ENCODE measurements at regions of chr1 and their contacts with region 1.

Region 1: GRCh38 chr1:36369061-36369861 is 16.5 kb downstream of the STK40 start:
- DNase-seq: peak; percentile 91
- ATAC-seq: peak; percentile 52
- H3K4me3 Mint-ChIP-seq: no peak overlapping the region
- H3K27ac Mint-ChIP-seq: peak overlapping the region; percentile 50
- H3K4me1 Mint-ChIP-seq: peaks cover 73% of the 10 kb centered on the region
- H3K27me3 Mint-ChIP-seq: no peaks in the 10 kb centered on the region

Region 2: GRCh38 chr1:36323597-36324352 is 45.5 kb before region 1 on chr1 and contains the start of gene EVA1B:
- CTCF ChIA-PET with region 1: interaction called, 13 read pairs
- POLR2A ChIA-PET with region 1: interaction called, 4 read pairs
- DNase-seq: peak; percentile 72
- ATAC-seq: peak; percentile 64
- H3K4me3 Mint-ChIP-seq: peak within 1 kb of the TSS; percentile 77
- H3K27ac Mint-ChIP-seq: peak within 1 kb of the TSS; percentile 74
- H3K4me1 Mint-ChIP-seq: peaks cover 47% of the 10 kb centered on the region
- H3K27me3 Mint-ChIP-seq: peaks cover 16% of the 10 kb centered on the region
- total RNA-seq, gene EVA1B: 12.3 to 13.3 TPM

Region 3: GRCh38 chr1:36350659-36351226 is 18.5 kb before region 1 on chr1:
- CTCF ChIA-PET with region 1: interaction called, 82 read pairs
- POLR2A ChIA-PET with region 1: interaction called, 16 read pairs
- DNase-seq: peak; percentile 37
- ATAC-seq: peak; percentile 73
- H3K4me3 Mint-ChIP-seq: peak overlapping the region; percentile 15
- H3K27ac Mint-ChIP-seq: peak overlapping the region; percentile 81
- H3K4me1 Mint-ChIP-seq: peaks cover 23% of the 10 kb centered on the region
- H3K27me3 Mint-ChIP-seq: no peaks in the 10 kb centered on the region

Region 4: DNA sequence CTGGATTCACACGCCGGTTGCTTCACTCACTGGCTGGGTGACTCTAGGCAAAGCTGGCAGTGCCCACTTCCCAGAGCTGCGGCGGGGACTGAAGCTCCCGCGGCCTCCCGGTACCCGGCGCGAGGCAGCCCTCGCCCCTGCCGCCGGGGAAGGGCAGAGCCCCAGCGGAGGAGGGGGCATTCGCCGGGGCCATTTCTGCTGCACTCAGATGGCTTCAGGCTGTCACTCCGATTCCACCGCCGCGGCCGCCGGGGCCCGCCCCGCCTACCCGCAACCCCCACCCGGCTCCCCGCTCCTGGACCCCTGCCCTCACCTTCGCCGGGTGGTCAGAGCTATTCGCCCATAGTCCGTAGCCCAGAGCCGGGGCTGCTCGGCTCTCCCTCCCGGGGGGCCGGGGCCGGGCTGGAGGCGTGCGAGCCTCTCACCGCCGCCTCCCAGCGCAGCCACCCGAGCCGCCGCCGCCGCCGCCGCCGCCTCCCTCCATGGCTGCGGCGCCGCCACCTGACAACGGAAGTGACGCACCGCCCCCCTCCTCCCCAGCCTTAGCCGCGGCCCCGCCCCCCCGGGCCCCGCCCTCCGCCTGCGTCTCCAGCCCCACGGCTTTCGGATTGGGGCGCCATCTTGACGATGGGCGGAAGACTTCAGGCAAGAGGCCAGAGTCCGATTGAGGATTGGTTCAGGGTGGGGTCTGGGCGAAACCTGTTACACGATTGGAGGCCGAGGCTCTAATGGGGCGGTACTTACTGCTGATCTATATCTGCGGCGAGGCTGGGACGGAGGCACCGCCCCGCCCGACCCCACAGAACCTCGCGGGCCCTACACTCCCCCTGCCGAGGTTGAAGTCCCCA is 16.4 kb after region 1 on chr1 and contains the start of gene STK40:
- CTCF ChIA-PET with region 1: interaction called, 24 read pairs
- POLR2A ChIA-PET with region 1: interaction called, 8 read pairs
- DNase-seq: peak; percentile 99
- ATAC-seq: peak; percentile 92
- H3K4me3 Mint-ChIP-seq: peak within 1 kb of the TSS; percentile 86
- H3K27ac Mint-ChIP-seq: peak within 1 kb of the TSS; percentile 99
- H3K4me1 Mint-ChIP-seq: peaks cover 54% of the 10 kb centered on the region
- H3K27me3 Mint-ChIP-seq: no peaks in the 10 kb centered on the region
- total RNA-seq, gene STK40: 69.7 to 72.4 TPM

Region 5: GRCh38 chr1:36397378-36398230 is 28.3 kb after region 1 on chr1 and contains the start of gene LSM10:
- CTCF ChIA-PET with region 1: interaction called, 30 read pairs
- POLR2A ChIA-PET with region 1: interaction called, 3 read pairs
- DNase-seq: peak; percentile 95
- ATAC-seq: peak; percentile 94
- H3K4me3 Mint-ChIP-seq: peak within 1 kb of the TSS; percentile 94
- H3K27ac Mint-ChIP-seq: peak within 1 kb of the TSS; percentile 96
- H3K4me1 Mint-ChIP-seq: peaks cover 43% of the 10 kb centered on the region
- H3K27me3 Mint-ChIP-seq: no peaks in the 10 kb centered on the region
- total RNA-seq, gene LSM10: 44.7 to 47.5 TPM

Region 6: GRCh38 chr1:36420836-36421664 is 51.8 kb after region 1 on chr1:
- CTCF ChIA-PET with region 1: interaction called, 16 read pairs
- POLR2A ChIA-PET with region 1: no interaction called
- DNase-seq: peak; percentile 94
- ATAC-seq: peak; percentile 98
- H3K4me3 Mint-ChIP-seq: peak overlapping the region; percentile 53
- H3K27ac Mint-ChIP-seq: peak overlapping the region; percentile 82
- H3K4me1 Mint-ChIP-seq: peaks cover 16% of the 10 kb centered on the region
- H3K27me3 Mint-ChIP-seq: no peaks in the 10 kb centered on the region

Region 7: GRCh38 chr1:36497207-36497606 is 127.9 kb after region 1 on chr1:
- CTCF ChIA-PET with region 1: no interaction called
- POLR2A ChIA-PET with region 1: no interaction called
- DNase-seq: no peak
- ATAC-seq: no peak
- H3K4me3 Mint-ChIP-seq: no peak overlapping the region
- H3K27ac Mint-ChIP-seq: no peak overlapping the region
- H3K4me1 Mint-ChIP-seq: no peaks in the 10 kb centered on the region
- H3K27me3 Mint-ChIP-seq: peaks cover 26% of the 10 kb centered on the region

Region 8: GRCh38 chr1:36585569-36586548 is 216.6 kb after region 1 on chr1:
- CTCF ChIA-PET with region 1: no interaction called
- POLR2A ChIA-PET with region 1: no interaction called
- DNase-seq: no peak
- ATAC-seq: no peak
- H3K4me3 Mint-ChIP-seq: no peak overlapping the region
- H3K27ac Mint-ChIP-seq: no peak overlapping the region
- H3K4me1 Mint-ChIP-seq: no peaks in the 10 kb centered on the region
- H3K27me3 Mint-ChIP-seq: peaks cover 28% of the 10 kb centered on the region

Region 9: DNA sequence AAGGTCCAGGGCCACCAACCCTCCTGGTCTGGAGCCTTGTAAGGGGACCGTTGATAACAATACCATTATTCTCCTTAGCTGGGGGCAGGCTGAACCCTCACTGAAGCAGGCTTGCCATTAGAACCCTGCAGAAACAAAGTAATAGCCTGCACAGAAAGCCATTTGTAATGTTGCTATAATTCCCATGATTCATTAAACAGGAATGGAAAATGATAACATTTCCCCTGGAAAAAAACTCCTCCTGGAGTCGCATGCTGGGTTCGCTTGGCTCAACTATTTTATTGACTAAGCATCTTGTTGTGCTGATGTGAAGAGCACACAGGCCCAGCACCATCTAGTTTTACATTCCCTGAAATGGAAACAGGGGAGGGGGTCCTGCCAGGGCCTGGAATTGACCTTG is 269.0 kb after region 1 on chr1:
- CTCF ChIA-PET with region 1: no interaction called
- POLR2A ChIA-PET with region 1: no interaction called
- DNase-seq: no peak
- ATAC-seq: no peak
- H3K4me3 Mint-ChIP-seq: no peak overlapping the region
- H3K27ac Mint-ChIP-seq: no peak overlapping the region
- H3K4me1 Mint-ChIP-seq: no peaks in the 10 kb centered on the region
- H3K27me3 Mint-ChIP-seq: peaks cover 6% of the 10 kb centered on the region

Measured in activated CD8-positive, alpha-beta T cell treated with anti-CD3 and anti-CD28 coated beads, Interleukin-2, amount 10 ng/mL, durations not matched to agents 7 days and 5 days (primary cell).